ENCODE measurements at regions of chr14 and their contacts with region 1.

Region 1: GRCh38 chr14:52220924-52221811 is 46.3 kb upstream of the PTGDR start:
- DNase-seq: no peak
- H3K4me3 ChIP-seq: no peak overlapping the region
- H3K27ac ChIP-seq: no peak overlapping the region
- H3K4me1 ChIP-seq: no peaks in the 10 kb centered on the region
- H3K27me3 ChIP-seq: no peaks in the 10 kb centered on the region
- CTCF ChIP-seq: no peak

Region 2: GRCh38 chr14:52325126-52325525 is 104.0 kb after region 1 on chr14:
- CTCF ChIA-PET with region 1: no interaction called
- POLR2A ChIA-PET with region 1: no interaction called
- intact Hi-C with region 1: no loop called
- DNase-seq: no peak
- H3K4me3 ChIP-seq: no peak overlapping the region
- H3K27ac ChIP-seq: no peak overlapping the region
- H3K4me1 ChIP-seq: no peaks in the 10 kb centered on the region
- H3K27me3 ChIP-seq: no peaks in the 10 kb centered on the region
- CTCF ChIP-seq: no peak

Region 3: DNA sequence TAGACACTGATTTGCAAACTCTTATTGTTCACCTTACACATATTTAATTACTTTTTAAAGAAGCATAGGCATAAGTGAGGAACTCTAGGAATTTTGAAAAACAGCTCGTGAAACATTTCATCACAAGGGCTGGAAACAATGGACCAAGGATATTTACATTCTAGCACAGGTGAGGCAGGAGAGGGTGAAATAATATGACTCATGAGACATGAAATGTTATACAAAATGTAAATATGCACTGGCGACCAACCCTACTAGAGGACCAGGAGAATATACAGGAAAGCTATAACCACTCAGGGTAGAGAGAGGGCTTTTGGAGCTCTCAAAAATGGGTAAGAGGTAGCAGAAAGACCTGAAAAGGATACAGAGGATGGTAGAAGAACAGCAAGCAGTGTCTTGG is 208.3 kb after region 1 on chr14:
- CTCF ChIA-PET with region 1: no interaction called
- POLR2A ChIA-PET with region 1: no interaction called
- intact Hi-C with region 1: no loop called
- DNase-seq: peak in 1 of 2 experiments; percentile 49
- H3K4me3 ChIP-seq: no peak overlapping the region
- H3K27ac ChIP-seq: no peak overlapping the region
- H3K4me1 ChIP-seq: peaks cover 10% of the 10 kb centered on the region
- H3K27me3 ChIP-seq: no peaks in the 10 kb centered on the region
- CTCF ChIP-seq: no peak

Region 4: GRCh38 chr14:52640137-52640536 is 419.0 kb after region 1 on chr14:
- CTCF ChIA-PET with region 1: no interaction called
- POLR2A ChIA-PET with region 1: interaction called, 19 read pairs
- intact Hi-C with region 1: no loop called
- DNase-seq: no peak
- H3K4me3 ChIP-seq: no peak overlapping the region
- H3K27ac ChIP-seq: no peak overlapping the region
- H3K4me1 ChIP-seq: no peaks in the 10 kb centered on the region
- H3K27me3 ChIP-seq: no peaks in the 10 kb centered on the region
- CTCF ChIP-seq: no peak

Region 5: DNA sequence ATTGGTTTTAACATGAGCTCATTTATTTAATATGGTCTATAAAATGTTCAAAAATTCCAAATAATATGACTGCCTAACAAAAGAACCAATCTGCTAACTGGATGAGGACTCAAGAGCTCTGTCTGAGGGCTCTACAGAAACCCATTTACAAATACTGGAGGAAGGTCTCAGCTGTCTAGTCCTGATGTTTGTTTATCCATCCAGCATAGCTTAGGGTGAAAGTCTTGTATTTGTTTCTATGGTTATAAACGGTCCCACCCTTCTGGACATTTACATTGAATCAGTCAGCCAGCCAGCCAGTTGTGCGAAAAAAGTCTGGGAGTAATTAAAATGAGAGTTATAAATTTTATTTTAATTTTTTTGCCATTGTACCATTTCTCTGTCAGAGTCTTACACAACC is 1514.7 kb after region 1 on chr14:
- CTCF ChIA-PET with region 1: no interaction called
- POLR2A ChIA-PET with region 1: interaction called, 15 read pairs
- intact Hi-C with region 1: no loop called
- DNase-seq: no peak
- H3K4me3 ChIP-seq: no peak overlapping the region
- H3K27ac ChIP-seq: no peak overlapping the region
- H3K4me1 ChIP-seq: no peaks in the 10 kb centered on the region
- H3K27me3 ChIP-seq: no peaks in the 10 kb centered on the region
- CTCF ChIP-seq: no peak

Measured in PC-9 (cell line).